Activated B cell treated with CpG ODN at 0.5 μM for 24 hours (primary cell): ENCODE measurements at regions of chr16 and their contacts with region 1.

Region 1: DNA sequence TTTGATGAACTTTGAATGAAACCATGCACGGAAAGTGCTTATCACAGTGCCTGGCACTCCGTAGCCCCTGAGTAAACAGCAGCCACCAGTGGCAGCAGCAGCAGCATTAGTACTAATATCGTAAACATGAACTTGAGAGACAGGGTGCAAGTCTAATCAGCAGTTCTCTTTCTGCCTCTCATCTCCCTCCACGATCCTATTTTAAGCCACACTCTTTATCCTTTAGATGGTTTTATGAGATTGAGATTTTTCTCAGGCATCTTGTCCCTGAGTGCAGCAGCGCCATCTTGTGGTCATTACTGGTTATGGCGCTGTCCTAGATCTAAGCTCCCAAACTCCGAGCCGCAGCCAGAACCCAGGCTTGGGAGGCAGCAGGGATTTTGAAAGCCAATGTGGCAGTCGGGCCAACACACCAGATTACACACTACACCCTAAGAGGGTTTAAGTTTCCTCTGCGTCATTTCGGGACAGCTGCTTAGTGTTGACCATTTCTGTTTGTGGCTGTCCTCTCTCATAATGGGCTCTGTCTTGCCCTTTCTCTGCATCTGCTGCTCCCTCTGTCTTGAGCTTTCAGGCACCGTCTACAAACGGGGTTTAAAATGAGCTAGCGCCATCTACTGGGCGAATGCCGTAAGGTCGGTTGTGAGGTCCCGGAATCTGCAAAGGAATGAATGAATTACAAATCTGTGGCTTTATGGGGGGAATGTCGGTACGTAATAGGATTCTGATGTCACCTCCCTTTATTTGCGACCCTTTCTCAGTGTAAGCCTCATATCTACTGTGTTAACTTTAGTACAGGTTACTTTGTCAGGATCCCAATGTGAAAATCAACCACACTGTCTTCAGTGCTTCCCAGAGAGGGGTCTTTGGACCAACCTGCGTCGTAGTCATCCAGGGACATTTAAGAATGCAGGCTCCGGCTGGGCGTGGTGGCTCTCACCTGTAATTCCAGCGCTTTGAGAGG is 64.5 kb downstream of the CYLD start:
- DNase-seq: peak; percentile 64
- ATAC-seq: peak; percentile 95
- H3K4me3 Mint-ChIP-seq: peak overlapping the region; percentile 77
- H3K27ac Mint-ChIP-seq: peak overlapping the region; percentile 73
- H3K4me1 Mint-ChIP-seq: peaks cover 17% of the 10 kb centered on the region
- H3K27me3 Mint-ChIP-seq: peaks cover 10% of the 10 kb centered on the region
- CTCF ChIP-seq: peak; percentile 80

Region 2: DNA sequence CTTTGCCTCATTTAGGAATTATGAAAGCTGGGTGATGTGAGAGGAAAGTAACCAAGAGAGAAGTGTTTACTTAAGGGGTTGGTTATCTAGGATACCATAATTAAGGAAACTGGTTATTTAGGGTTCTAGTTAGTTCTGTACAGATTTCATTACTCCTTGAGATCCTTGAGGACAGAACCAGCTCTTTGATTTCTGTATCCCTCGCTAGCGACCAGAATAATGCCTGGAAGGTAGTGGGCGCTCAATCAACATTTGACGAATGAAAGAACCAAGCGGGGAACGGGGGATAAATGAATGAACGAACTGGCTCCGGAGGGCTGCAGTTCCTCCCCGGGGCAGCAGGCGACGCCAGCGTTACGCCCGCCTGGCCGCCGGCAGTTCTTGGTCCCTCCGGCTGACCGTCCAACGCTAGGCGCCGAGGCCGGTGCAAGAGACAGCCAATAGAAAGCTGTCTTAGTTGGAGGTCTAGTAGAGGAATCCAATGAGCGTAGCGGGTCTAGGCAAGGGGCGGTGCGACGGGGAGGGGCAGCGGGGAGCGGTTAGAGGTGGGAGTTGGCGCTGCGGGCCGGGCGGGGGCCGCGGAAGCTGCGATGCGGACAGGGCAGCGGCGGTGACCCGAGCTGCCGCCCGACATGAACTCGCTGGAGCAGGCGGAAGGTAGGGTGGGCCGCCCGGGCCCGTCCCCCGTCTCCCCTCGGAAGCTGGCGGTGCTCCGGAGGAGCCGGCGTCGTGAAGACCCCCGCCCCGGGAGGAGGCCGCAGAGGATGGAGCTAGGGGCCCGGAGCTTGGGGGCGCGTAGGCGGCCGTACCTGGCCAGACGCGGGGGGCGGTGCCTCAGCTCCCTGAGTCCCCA is 781.5 kb before region 1 on chr16 and contains the start of gene CNEP1R1:
- CTCF ChIA-PET with region 1: interaction called, 22 read pairs
- POLR2A ChIA-PET with region 1: no interaction called
- intact Hi-C with region 1: no loop called
- DNase-seq: peak; percentile 87
- ATAC-seq: peak; percentile 95
- H3K4me3 Mint-ChIP-seq: peak within 1 kb of the TSS; percentile 96
- H3K27ac Mint-ChIP-seq: peak within 1 kb of the TSS; percentile 83
- H3K4me1 Mint-ChIP-seq: peaks cover 19% of the 10 kb centered on the region
- H3K27me3 Mint-ChIP-seq: peaks cover 6% of the 10 kb centered on the region
- CTCF ChIP-seq: peak; percentile 82
- total RNA-seq, gene CNEP1R1: 22.1 and 31.0 TPM in 2 replicates

Region 3: GRCh38 chr16:50665128-50665878 is 141.1 kb before region 1 on chr16:
- CTCF ChIA-PET with region 1: interaction called, 41 read pairs
- POLR2A ChIA-PET with region 1: interaction called, 3 read pairs
- intact Hi-C with region 1: loop called (anchors 5 kb)
- DNase-seq: peak; percentile 68
- ATAC-seq: peak; percentile 70
- H3K4me3 Mint-ChIP-seq: peak overlapping the region; percentile 81
- H3K27ac Mint-ChIP-seq: peak overlapping the region; percentile 65
- H3K4me1 Mint-ChIP-seq: peaks cover 23% of the 10 kb centered on the region
- H3K27me3 Mint-ChIP-seq: no peaks in the 10 kb centered on the region
- CTCF ChIP-seq: no peak

Region 4: DNA sequence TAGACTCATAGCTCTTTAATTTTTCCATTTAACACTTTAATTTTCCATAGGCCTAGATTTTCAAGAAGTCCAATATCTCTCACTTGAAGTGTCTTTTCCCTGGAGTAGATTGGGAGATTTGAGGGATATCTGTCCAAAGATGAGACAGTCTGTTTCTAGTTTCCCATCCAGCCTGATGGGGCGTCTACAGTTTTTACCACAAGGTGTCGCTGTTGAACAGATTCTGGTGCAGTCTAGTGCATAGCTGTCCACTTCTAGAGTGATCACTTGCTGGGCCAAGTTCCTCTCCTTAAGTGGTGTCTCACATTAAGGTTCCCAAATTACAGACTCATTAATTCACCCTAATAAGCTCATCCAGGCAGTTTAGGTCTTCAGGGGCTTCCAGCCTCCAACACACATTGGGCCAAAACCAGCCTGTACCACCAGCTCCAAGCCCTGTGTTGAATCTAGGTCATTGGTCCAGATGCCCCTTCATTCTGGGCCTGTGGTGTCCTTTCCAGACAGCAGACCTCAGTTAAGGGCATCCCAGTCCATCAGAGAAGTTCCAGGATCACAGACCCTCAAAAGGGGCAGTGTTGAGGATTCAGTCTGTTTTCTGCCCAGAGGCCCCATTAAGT is 134.6 kb before region 1 on chr16:
- CTCF ChIA-PET with region 1: interaction called, 41 read pairs
- POLR2A ChIA-PET with region 1: interaction called, 4 read pairs
- intact Hi-C with region 1: loop called (anchors 5 kb)
- DNase-seq: no peak
- ATAC-seq: peak; percentile 36
- H3K4me3 Mint-ChIP-seq: no peak overlapping the region
- H3K27ac Mint-ChIP-seq: peak overlapping the region; percentile 46
- H3K4me1 Mint-ChIP-seq: peaks cover 7% of the 10 kb centered on the region
- H3K27me3 Mint-ChIP-seq: no peaks in the 10 kb centered on the region
- CTCF ChIP-seq: no peak

Region 5: DNA sequence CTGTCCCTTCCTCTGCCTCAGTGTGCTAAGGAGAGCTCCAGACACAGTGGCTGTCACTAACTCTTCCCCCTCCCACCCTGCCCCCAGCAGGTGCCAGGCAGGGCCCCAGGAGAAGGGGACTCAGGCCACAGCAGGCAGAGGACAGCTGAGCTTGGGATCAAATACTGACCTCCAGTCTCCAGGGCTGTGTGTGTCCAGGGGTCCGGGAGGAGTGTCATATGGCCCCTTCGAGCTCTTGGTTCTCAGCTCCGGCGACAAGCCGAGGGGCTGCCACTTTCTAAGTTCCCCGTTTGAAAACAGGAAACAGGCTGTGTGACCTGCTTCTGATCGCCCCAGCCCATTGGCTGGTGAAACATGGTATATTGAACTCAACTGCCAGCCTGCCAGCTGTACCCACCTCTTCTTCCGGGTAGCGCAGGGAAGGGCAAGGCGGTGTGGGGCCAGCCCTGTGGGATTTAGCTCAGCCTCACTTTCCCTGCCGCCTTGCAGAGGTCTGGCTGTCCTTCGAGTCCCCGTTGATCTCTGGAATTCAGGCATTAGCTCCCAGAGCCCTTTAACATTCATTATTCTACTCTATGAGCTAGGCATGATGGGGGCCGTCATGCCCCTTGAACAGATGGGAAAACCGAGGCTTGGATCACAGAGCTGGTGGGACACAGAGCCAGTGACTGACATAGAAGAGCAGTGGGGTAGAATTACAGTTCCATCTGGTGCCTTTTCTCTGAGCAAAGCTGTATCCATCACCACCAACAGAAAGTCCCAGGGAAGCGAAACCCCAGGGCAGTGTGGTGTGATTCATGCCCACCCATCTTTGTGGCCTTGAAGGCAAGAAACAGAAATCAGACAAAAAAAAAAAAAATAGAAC is 125.1 kb before region 1 on chr16 and contains the start of gene SNX20:
- CTCF ChIA-PET with region 1: interaction called, 3 read pairs
- POLR2A ChIA-PET with region 1: no interaction called
- intact Hi-C with region 1: loop called (anchors 5 kb)
- DNase-seq: peak; percentile 49
- ATAC-seq: peak; percentile 78
- H3K4me3 Mint-ChIP-seq: peak within 1 kb of the TSS; percentile 86
- H3K27ac Mint-ChIP-seq: peak within 1 kb of the TSS; percentile 93
- H3K4me1 Mint-ChIP-seq: peaks cover 79% of the 10 kb centered on the region
- H3K27me3 Mint-ChIP-seq: no peaks in the 10 kb centered on the region
- CTCF ChIP-seq: no peak
- total RNA-seq, gene SNX20: 33.1 and 34.5 TPM in 2 replicates

Region 6: GRCh38 chr16:50781043-50781442 is 25.3 kb before region 1 on chr16:
- CTCF ChIA-PET with region 1: interaction called, 12 read pairs
- POLR2A ChIA-PET with region 1: no interaction called
- intact Hi-C with region 1: no loop called
- DNase-seq: no peak
- ATAC-seq: no peak
- H3K4me3 Mint-ChIP-seq: no peak overlapping the region
- H3K27ac Mint-ChIP-seq: no peak overlapping the region
- H3K4me1 Mint-ChIP-seq: no peaks in the 10 kb centered on the region
- H3K27me3 Mint-ChIP-seq: no peaks in the 10 kb centered on the region
- CTCF ChIP-seq: no peak

Region 7: DNA sequence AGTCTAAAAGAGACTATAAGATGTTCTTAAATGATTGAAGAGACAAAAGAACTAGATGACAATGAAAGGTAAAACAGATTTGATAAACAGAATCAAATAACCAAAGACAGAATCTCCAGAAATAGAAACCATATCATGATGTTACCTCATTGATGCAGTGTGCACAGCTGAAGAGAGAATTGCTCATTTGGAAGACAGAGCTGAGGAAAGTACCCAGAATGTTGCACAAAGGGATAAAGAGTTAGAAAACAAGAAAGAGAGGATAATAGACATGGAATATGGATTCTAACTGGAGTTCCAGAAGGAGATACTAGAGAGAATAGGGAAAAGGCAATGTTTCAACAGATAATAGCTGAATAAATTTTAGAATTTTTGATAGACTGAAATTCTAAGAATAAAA is 16.6 kb before region 1 on chr16:
- CTCF ChIA-PET with region 1: interaction called, 25 read pairs
- POLR2A ChIA-PET with region 1: no interaction called
- intact Hi-C with region 1: no loop called
- DNase-seq: no peak
- ATAC-seq: no peak
- H3K4me3 Mint-ChIP-seq: no peak overlapping the region
- H3K27ac Mint-ChIP-seq: no peak overlapping the region
- H3K4me1 Mint-ChIP-seq: no peaks in the 10 kb centered on the region
- H3K27me3 Mint-ChIP-seq: no peaks in the 10 kb centered on the region
- CTCF ChIP-seq: no peak

Region 8: DNA sequence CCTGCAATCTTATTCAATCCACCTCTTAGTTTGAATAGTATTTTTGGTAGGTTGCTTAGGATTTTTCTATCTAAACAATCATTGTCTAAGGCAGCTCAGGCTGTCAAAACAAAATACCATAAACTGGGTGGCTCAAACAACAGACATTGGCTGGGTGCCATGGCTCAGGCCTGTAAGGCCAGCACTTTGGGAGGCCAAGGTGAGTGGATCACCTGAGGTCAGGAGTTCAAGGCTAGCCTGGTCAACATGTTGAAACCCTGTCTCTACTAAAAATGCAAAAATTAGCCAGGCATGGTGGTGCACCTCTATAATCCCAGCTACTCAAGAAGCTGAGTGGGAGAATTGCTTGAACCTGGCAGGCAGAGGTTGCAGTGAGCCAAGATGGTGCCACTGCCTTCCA is 62.2 kb after region 1 on chr16:
- CTCF ChIA-PET with region 1: no interaction called
- POLR2A ChIA-PET with region 1: no interaction called
- intact Hi-C with region 1: no loop called
- DNase-seq: no peak
- ATAC-seq: no peak
- H3K4me3 Mint-ChIP-seq: no peak overlapping the region
- H3K27ac Mint-ChIP-seq: no peak overlapping the region
- H3K4me1 Mint-ChIP-seq: no peaks in the 10 kb centered on the region
- H3K27me3 Mint-ChIP-seq: peaks cover 3% of the 10 kb centered on the region
- CTCF ChIP-seq: no peak